Activated CD4-positive, alpha-beta T cell treated with anti-CD3 and anti-CD28 coated beads for 36 hours (primary cell): ENCODE measurements at regions of chr12 and their contacts with region 1.

Region 1: DNA sequence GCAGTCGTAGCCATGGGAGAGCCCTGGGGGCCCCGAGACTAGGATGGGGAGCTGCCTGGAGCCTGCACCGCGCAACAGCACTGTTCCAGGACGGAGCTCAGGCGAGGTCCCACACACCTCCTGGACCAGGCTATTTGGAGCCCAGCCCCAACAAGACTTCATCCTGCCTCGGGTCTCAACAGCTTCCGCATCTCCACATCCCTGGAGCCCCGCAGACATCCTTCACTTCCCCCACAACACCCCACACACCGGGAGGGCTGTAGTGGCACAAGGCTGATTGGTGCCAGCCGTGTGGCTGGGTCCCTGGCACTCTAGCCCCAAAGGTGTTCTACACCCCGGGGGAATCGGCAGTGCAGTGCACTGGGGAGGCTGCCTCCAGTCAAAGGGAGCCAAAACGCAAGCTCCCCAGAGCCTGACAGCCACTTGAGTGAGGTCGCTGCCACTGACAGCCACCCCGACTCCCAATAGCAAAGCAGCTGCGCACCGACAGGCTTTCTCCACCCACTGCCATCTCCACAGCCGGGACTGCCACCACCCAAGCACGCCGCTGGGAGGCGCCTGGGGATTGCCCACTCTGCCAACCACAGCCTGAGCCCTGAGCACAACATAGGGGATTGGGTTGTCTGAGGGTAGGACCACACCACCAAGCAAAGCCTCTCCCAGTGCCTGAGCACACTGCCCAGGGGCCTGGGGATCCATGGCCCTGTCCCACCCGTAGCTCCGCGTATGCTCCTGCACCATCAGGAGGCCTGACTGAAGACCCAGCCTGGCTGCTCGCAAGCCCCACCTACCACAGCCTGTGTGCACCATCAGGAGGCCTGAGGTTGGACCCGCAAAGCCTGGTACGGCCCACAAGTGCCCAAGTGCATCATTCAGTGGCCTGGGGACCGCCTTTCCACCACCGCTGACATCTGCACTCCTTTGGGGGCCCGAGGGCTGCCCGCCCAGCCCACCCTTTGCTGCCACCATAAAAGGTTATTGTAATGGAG is 13.2 kb upstream of the KLRF1 start:
- DNase-seq: peak; percentile 96
- ATAC-seq: peak; percentile 97
- H3K4me3 Mint-ChIP-seq: peak overlapping the region; percentile 81
- H3K27ac Mint-ChIP-seq: peak overlapping the region; percentile 67
- H3K4me1 Mint-ChIP-seq: peaks cover 12% of the 10 kb centered on the region
- H3K27me3 Mint-ChIP-seq: peaks cover 8% of the 10 kb centered on the region

Region 2: DNA sequence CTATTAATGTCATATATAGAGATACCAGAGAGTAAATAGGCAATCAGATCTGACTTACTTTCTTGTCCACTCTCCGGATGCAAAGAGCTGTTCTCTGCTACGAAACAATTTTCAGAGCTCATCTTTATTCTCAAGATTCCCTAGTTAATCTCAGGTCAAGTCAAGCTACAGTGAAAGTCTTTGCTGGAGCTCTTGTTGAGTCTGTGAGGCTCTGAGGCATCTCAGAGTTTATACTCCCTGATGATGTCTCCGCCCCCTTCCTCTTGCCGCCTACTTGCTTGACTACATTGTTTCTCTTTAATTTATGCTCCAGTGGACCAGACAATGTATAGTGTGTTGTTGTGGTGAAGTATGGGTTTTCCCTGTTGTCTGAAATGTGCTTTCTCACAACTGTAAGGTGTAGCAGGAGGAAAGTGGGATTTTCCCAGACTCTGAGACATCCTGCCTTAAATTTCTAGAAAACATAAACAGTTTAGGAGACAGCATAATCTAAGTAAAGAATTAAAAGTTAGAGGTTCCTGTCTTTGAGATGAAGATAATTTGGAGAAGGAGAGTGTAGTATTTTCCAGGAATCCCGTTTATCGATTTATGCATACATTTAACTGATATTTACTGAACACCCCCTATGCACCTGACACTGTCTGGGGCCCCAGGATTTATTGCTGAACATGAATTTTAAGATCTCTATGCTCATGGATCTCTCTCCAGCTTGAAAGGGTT is 53.3 kb before region 1 on chr12 and contains the start of gene CD69:
- CTCF ChIA-PET with region 1: interaction called, 291 read pairs
- POLR2A ChIA-PET with region 1: interaction called, 10 read pairs
- intact Hi-C with region 1: no loop called
- DNase-seq: peak; percentile 87
- ATAC-seq: peak; percentile 55
- H3K4me3 Mint-ChIP-seq: peak within 1 kb of the TSS; percentile 99
- H3K27ac Mint-ChIP-seq: peak within 1 kb of the TSS; percentile 100
- H3K4me1 Mint-ChIP-seq: peaks cover 49% of the 10 kb centered on the region
- H3K27me3 Mint-ChIP-seq: no peaks in the 10 kb centered on the region
- total RNA-seq, gene CD69: 97.9 to 127 TPM

Region 3: GRCh38 chr12:9869307-9870161 is 55.4 kb after region 1 on chr12 and contains the start of gene CLEC2B:
- CTCF ChIA-PET with region 1: interaction called, 24 read pairs
- POLR2A ChIA-PET with region 1: no interaction called
- intact Hi-C with region 1: loop called (anchors 2 to 5 kb)
- DNase-seq: peak; percentile 59
- ATAC-seq: peak; percentile 69
- H3K4me3 Mint-ChIP-seq: peak within 1 kb of the TSS; percentile 77
- H3K27ac Mint-ChIP-seq: peak within 1 kb of the TSS; percentile 95
- H3K4me1 Mint-ChIP-seq: peaks cover 23% of the 10 kb centered on the region
- H3K27me3 Mint-ChIP-seq: no peaks in the 10 kb centered on the region
- total RNA-seq, gene CLEC2B: 21.8 to 25.8 TPM

Region 4: DNA sequence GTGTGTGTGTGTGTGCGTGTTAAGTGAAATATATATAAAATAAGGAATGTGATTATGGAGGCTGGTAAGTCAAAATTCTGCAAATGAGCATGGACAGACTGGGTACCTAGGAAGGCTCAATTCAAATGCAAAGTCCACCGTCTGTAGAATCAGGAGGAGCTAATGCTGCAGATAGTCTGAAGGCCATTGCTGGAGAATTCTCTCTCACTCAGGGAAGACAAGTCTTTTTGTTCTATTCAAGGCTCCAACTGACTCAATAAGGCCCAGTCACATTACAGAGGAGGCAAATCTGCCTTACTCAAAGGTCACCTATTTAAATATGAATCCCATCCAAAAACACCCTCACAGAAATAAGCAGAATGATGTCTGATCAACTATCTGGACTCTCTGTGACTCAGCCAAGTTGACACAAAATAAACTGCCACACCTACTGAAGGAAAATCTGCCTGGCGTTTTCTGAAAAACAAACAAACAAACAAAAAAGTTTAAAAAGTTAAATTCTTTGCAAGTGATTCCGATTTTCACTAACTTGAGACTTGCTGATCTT is 66.5 kb after region 1 on chr12:
- CTCF ChIA-PET with region 1: no interaction called
- POLR2A ChIA-PET with region 1: no interaction called
- intact Hi-C with region 1: no loop called
- DNase-seq: no peak
- ATAC-seq: no peak
- H3K4me3 Mint-ChIP-seq: no peak overlapping the region
- H3K27ac Mint-ChIP-seq: no peak overlapping the region
- H3K4me1 Mint-ChIP-seq: peaks cover 5% of the 10 kb centered on the region
- H3K27me3 Mint-ChIP-seq: no peaks in the 10 kb centered on the region

Region 5: GRCh38 chr12:9925708-9926393 is 111.7 kb after region 1 on chr12:
- CTCF ChIA-PET with region 1: interaction called, 48 read pairs
- POLR2A ChIA-PET with region 1: no interaction called
- intact Hi-C with region 1: loop called (anchors 1 kb)
- DNase-seq: peak; percentile 19
- ATAC-seq: peak; percentile 61
- H3K4me3 Mint-ChIP-seq: peak overlapping the region; percentile 10
- H3K27ac Mint-ChIP-seq: peak overlapping the region; percentile 12
- H3K4me1 Mint-ChIP-seq: peaks cover 15% of the 10 kb centered on the region
- H3K27me3 Mint-ChIP-seq: peaks cover 2% of the 10 kb centered on the region

Region 6: GRCh38 chr12:10001171-10001776 is 187.2 kb after region 1 on chr12:
- CTCF ChIA-PET with region 1: interaction called, 12 read pairs
- POLR2A ChIA-PET with region 1: no interaction called
- intact Hi-C with region 1: loop called in 1 of 2 experiments (anchors 10 kb)
- DNase-seq: no peak
- ATAC-seq: no peak
- H3K4me3 Mint-ChIP-seq: no peak overlapping the region
- H3K27ac Mint-ChIP-seq: no peak overlapping the region
- H3K4me1 Mint-ChIP-seq: no peaks in the 10 kb centered on the region
- H3K27me3 Mint-ChIP-seq: no peaks in the 10 kb centered on the region

Region 7: GRCh38 chr12:10190558-10191388 is 376.7 kb after region 1 on chr12:
- CTCF ChIA-PET with region 1: interaction called, 4 read pairs
- POLR2A ChIA-PET with region 1: no interaction called
- intact Hi-C with region 1: loop called in 1 of 2 experiments (anchors 1 kb)
- DNase-seq: peak; percentile 68
- ATAC-seq: peak; percentile 100
- H3K4me3 Mint-ChIP-seq: no peak overlapping the region
- H3K27ac Mint-ChIP-seq: no peak overlapping the region
- H3K4me1 Mint-ChIP-seq: no peaks in the 10 kb centered on the region
- H3K27me3 Mint-ChIP-seq: peaks cover 11% of the 10 kb centered on the region